Naive thymus-derived CD4-positive, alpha-beta T cell (primary cell): ENCODE measurements at regions of chr11 and their contacts with region 1.

Region 1: GRCh38 chr11:62841361-62842184 is 2.2 kb upstream of the WDR74 start:
- DNase-seq: peak; percentile 68 to 94 (median 88)
- ATAC-seq: peak; percentile 71
- H3K4me3 ChIP-seq: peak overlapping the region; percentile 73
- H3K4me3 Mint-ChIP-seq: no peak overlapping the region
- H3K27ac ChIP-seq: peak overlapping the region; percentile 99
- H3K27ac Mint-ChIP-seq: no peak overlapping the region
- H3K4me1 ChIP-seq: peaks cover 9 to 22% of the 10 kb centered on the region in 2 donors
- H3K4me1 Mint-ChIP-seq: peaks cover 15 to 31% (median 26%) of the 10 kb centered on the region in 7 donors
- H3K27me3 ChIP-seq: no peaks in the 10 kb centered on the region
- H3K27me3 Mint-ChIP-seq: peaks cover 0 to 6% (median 0%) of the 10 kb centered on the region in 5 donors

Region 2: DNA sequence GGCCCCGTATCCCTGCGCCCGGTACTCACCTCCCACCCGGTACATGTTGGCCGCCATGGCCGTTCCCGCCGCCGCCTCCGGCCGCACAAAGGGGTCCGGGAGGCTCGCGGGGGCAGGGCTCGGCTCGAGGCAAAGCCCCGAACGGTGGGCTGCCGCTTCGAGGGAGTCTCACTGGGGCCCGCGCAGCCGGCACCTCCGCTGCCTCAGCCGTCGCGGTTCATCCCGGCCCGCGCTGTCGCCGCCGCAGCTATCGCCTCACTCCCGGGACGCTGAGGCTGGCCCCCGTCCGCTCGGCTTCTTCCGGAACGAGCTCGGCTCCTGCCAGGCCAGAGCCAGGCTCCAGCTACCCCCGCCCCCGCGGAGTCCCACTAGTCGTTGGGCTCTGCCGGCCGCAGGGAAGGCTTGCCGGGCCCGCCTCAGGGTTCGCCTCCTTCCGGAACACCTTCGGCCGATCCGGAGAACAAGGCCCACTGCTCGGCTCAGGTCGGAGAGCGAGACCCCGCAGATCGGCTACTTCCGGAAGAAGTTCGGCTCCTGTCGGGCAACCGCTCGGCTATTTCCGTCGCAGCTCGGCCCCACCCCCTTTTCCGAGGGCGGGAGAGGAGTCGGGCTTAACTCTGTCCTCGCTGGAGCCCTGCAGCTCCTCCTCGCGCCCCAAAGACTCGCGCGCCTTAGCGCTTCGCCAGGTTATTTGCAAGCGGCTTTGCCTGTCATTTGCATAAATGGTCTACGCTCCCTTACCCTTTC is 240.0 kb before region 1 on chr11 and contains the start of gene MTA2:
- CTCF ChIA-PET with region 1: no interaction called
- POLR2A ChIA-PET with region 1: interaction called, 12 read pairs
- intact Hi-C with region 1: loop called in 1 of 2 experiments (anchors 1 kb)
- DNase-seq: peak; percentile 98 to 100 (median 100)
- ATAC-seq: peak; percentile 85
- H3K4me3 ChIP-seq: peak within 1 kb of the TSS; percentile 71
- H3K4me3 Mint-ChIP-seq: peak within 1 kb of the TSS; percentile 85 to 99 (median 94)
- H3K27ac ChIP-seq: peak within 1 kb of the TSS; percentile 98
- H3K27ac Mint-ChIP-seq: peak within 1 kb of the TSS; percentile 90 to 98 (median 97)
- H3K4me1 ChIP-seq: peaks cover 16 to 23% of the 10 kb centered on the region in 2 donors
- H3K4me1 Mint-ChIP-seq: peaks cover 43 to 64% (median 54%) of the 10 kb centered on the region in 7 donors
- H3K27me3 ChIP-seq: no peaks in the 10 kb centered on the region
- H3K27me3 Mint-ChIP-seq: no peaks in the 10 kb centered on the region
- total RNA-seq, gene MTA2: 134 to 238 (median 199) TPM

Region 3: GRCh38 chr11:62678770-62679696 is 162.5 kb before region 1 on chr11 and contains the start of gene UBXN1:
- CTCF ChIA-PET with region 1: no interaction called
- POLR2A ChIA-PET with region 1: interaction called, 13 read pairs
- intact Hi-C with region 1: no loop called
- DNase-seq: peak; percentile 63 to 84 (median 81)
- ATAC-seq: peak; percentile 91
- H3K4me3 ChIP-seq: peak within 1 kb of the TSS; percentile 87
- H3K4me3 Mint-ChIP-seq: peak within 1 kb of the TSS; percentile 86 to 93 (median 90)
- H3K27ac ChIP-seq: peak within 1 kb of the TSS; percentile 98
- H3K27ac Mint-ChIP-seq: peak within 1 kb of the TSS; percentile 88 to 98 (median 94)
- H3K4me1 ChIP-seq: peaks cover 13 to 15% of the 10 kb centered on the region in 2 donors
- H3K4me1 Mint-ChIP-seq: peaks cover 19 to 41% (median 37%) of the 10 kb centered on the region in 7 donors
- H3K27me3 ChIP-seq: no peaks in the 10 kb centered on the region
- H3K27me3 Mint-ChIP-seq: no peaks in the 10 kb centered on the region
- total RNA-seq, gene UBXN1: 114 to 215 (median 207) TPM

Region 4: GRCh38 chr11:62771144-62772021 is 70.2 kb before region 1 on chr11 and contains the start of gene TAF6L:
- CTCF ChIA-PET with region 1: no interaction called
- POLR2A ChIA-PET with region 1: interaction called, 33 read pairs
- intact Hi-C with region 1: loop called (anchors 1 kb)
- DNase-seq: peak; percentile 80 to 98 (median 82)
- ATAC-seq: peak; percentile 92
- H3K4me3 ChIP-seq: peak within 1 kb of the TSS; percentile 66
- H3K4me3 Mint-ChIP-seq: peak within 1 kb of the TSS; percentile 88 to 98 (median 94)
- H3K27ac ChIP-seq: peak within 1 kb of the TSS; percentile 82
- H3K27ac Mint-ChIP-seq: peak within 1 kb of the TSS; percentile 89 to 97 (median 94)
- H3K4me1 ChIP-seq: peaks cover 10 to 13% of the 10 kb centered on the region in 2 donors
- H3K4me1 Mint-ChIP-seq: peaks cover 17 to 37% (median 27%) of the 10 kb centered on the region in 7 donors
- H3K27me3 ChIP-seq: no peaks in the 10 kb centered on the region
- H3K27me3 Mint-ChIP-seq: no peaks in the 10 kb centered on the region
- total RNA-seq, gene TAF6L: 13.1 to 34.9 (median 24.1) TPM

Region 5: GRCh38 chr11:62805076-62805892 is 36.3 kb before region 1 on chr11 and contains the start of gene NXF1:
- CTCF ChIA-PET with region 1: no interaction called
- POLR2A ChIA-PET with region 1: interaction called, 109 read pairs
- intact Hi-C with region 1: loop called (anchors 1 kb)
- DNase-seq: peak; percentile 91 to 99 (median 97)
- ATAC-seq: peak; percentile 92
- H3K4me3 ChIP-seq: peak within 1 kb of the TSS; percentile 87
- H3K4me3 Mint-ChIP-seq: peak within 1 kb of the TSS; percentile 90 to 100 (median 99)
- H3K27ac ChIP-seq: peak within 1 kb of the TSS; percentile 97
- H3K27ac Mint-ChIP-seq: peak within 1 kb of the TSS; percentile 95 to 100 (median 99)
- H3K4me1 ChIP-seq: peaks cover 13 to 18% of the 10 kb centered on the region in 2 donors
- H3K4me1 Mint-ChIP-seq: peaks cover 17 to 55% (median 34%) of the 10 kb centered on the region in 7 donors
- H3K27me3 ChIP-seq: no peaks in the 10 kb centered on the region
- H3K27me3 Mint-ChIP-seq: peaks cover 0 to 2% (median 0%) of the 10 kb centered on the region in 5 donors
- total RNA-seq, gene NXF1: 92.1 to 421 (median 195) TPM

Region 6: DNA sequence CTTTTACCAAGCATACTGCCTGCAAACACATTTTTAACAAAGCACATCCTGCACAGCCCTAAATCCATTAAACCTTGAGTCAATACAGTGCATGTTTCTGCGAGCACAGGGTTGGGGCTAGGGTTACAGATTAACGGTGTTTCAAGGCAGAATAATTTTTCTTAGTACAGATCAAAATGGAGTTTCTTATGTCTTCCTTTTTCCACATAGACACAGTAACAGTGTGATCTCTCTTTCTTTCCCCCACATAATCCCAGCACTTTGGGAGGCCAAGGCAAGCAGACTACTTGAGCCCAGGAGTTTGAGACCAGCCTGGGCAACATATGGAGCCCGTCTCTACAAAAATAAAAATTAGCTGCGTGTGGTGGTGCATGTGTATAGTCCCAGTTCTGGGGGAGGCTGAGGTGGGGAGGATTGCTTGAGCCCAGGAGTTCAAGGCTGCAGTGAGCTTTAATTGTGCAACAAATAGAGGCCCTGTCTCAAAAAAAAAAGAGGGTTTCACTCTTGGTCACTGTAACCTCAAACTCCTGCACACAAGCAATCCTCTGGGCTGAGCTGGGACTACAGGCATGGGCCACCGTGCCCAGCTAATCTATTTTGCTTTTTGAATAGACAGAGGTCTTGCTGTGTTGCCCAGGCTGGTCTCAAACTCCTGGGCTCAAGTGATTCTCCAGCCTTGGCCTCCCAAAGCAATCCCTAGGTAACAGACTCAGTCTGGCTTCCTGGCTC is 19.4 kb after region 1 on chr11:
- CTCF ChIA-PET with region 1: interaction called, 11 read pairs
- POLR2A ChIA-PET with region 1: interaction called, 379 read pairs
- intact Hi-C with region 1: loop called in 1 of 2 experiments (anchors 1 kb)
- DNase-seq: no peak
- ATAC-seq: no peak
- H3K4me3 ChIP-seq: no peak overlapping the region
- H3K4me3 Mint-ChIP-seq: no peak overlapping the region
- H3K27ac ChIP-seq: no peak overlapping the region
- H3K27ac Mint-ChIP-seq: peak overlapping the region in 2 of 9 donors; percentile 58 to 59
- H3K4me1 ChIP-seq: peaks cover 5 to 8% of the 10 kb centered on the region in 2 donors
- H3K4me1 Mint-ChIP-seq: peaks cover 7 to 54% (median 17%) of the 10 kb centered on the region in 7 donors
- H3K27me3 ChIP-seq: no peaks in the 10 kb centered on the region
- H3K27me3 Mint-ChIP-seq: peaks cover 0 to under 1% (median 0%) of the 10 kb centered on the region in 5 donors

Region 7: GRCh38 chr11:62905927-62906531 is 64.5 kb after region 1 on chr11:
- CTCF ChIA-PET with region 1: no interaction called
- POLR2A ChIA-PET with region 1: no interaction called
- intact Hi-C with region 1: no loop called
- DNase-seq: peak; percentile 44 to 80 (median 63)
- ATAC-seq: peak; percentile 86
- H3K4me3 ChIP-seq: no peak overlapping the region
- H3K4me3 Mint-ChIP-seq: peak overlapping the region in 1 of 10 donors; percentile 2
- H3K27ac ChIP-seq: no peak overlapping the region
- H3K27ac Mint-ChIP-seq: no peak overlapping the region
- H3K4me1 ChIP-seq: no peaks in the 10 kb centered on the region
- H3K4me1 Mint-ChIP-seq: peaks cover 0 to 18% (median 0%) of the 10 kb centered on the region in 7 donors
- H3K27me3 ChIP-seq: no peaks in the 10 kb centered on the region
- H3K27me3 Mint-ChIP-seq: peaks cover 0 to 23% (median 5%) of the 10 kb centered on the region in 5 donors